GM10248 (cell line): ENCODE measurements at regions of chr1 and their contacts with region 1.

Region 1: GRCh38 chr1:32215629-32216480 is 6.3 kb downstream of the TMEM234 start:
- DNase-seq: peak; percentile 69
- CTCF ChIP-seq: peak; percentile 93

Region 2: GRCh38 chr1:32107742-32108661 is 107.9 kb before region 1 on chr1 and contains the start of gene KPNA6:
- CTCF ChIA-PET with region 1: no interaction called
- POLR2A ChIA-PET with region 1: no interaction called
- DNase-seq: peak; percentile 85
- CTCF ChIP-seq: no peak

Region 3: GRCh38 chr1:32186077-32186476 is 29.8 kb before region 1 on chr1:
- CTCF ChIA-PET with region 1: interaction called, 10 read pairs
- POLR2A ChIA-PET with region 1: no interaction called
- DNase-seq: no peak
- CTCF ChIP-seq: no peak

Region 4: GRCh38 chr1:32228771-32229170 is 12.9 kb after region 1 on chr1:
- CTCF ChIA-PET with region 1: interaction called, 25 read pairs
- POLR2A ChIA-PET with region 1: no interaction called
- DNase-seq: no peak
- CTCF ChIP-seq: no peak

Region 5: GRCh38 chr1:32255072-32256071 is 39.5 kb after region 1 on chr1:
- CTCF ChIA-PET with region 1: interaction called, 156 read pairs
- POLR2A ChIA-PET with region 1: no interaction called
- DNase-seq: no peak
- CTCF ChIP-seq: no peak

Region 6: GRCh38 chr1:32329931-32330466 is 114.1 kb after region 1 on chr1:
- CTCF ChIA-PET with region 1: interaction called, 10 read pairs
- POLR2A ChIA-PET with region 1: interaction called, 20 read pairs
- DNase-seq: no peak
- CTCF ChIP-seq: no peak

Region 7: DNA sequence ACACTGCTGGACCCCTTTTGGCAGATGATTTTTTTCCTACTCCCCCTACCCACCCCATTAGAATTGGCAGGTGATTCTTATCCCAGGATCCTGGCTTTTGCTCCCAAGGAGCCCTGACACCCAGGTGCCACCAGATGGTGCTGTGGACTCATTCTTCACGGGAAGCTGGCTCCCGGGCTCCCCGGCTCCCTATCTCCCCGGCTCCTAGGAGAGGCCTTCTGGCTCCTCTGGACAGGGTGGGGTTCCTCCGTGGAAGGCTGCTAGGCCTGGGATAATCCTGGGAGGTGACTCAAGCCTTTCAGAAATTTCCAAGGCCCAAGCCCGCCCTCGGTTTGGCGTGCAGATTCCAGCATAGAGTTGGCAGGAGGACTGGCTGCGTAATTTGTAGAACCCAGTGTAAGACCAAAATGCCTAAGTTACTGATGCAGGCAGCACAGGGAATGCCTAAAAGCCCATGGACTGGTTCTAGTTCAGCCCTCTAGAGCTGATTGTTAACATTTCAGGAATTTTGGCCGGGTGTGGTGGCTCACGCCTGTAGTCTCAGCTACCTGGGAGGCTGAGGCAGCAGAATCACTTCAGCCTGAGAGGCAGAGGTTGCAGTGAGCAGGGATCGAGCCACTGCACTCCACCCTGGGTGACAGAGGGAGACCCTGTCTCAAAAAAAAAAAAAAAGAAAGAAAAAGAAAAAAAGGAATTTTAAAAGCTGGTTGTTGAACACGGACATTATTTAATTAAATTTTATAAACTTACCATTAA is 185.2 kb after region 1 on chr1:
- CTCF ChIA-PET with region 1: interaction called, 17 read pairs
- POLR2A ChIA-PET with region 1: no interaction called
- DNase-seq: peak; percentile 72
- CTCF ChIP-seq: peak; percentile 90

Region 8: GRCh38 chr1:32508751-32509140 is 292.9 kb after region 1 on chr1:
- CTCF ChIA-PET with region 1: no interaction called
- POLR2A ChIA-PET with region 1: no interaction called
- DNase-seq: no peak
- CTCF ChIP-seq: no peak